Activated CD8-positive, alpha-beta T cell treated with anti-CD3 and anti-CD28 coated beads, Interleukin-2, amount 10 ng/mL, durations not matched to agents 7 days and 5 days (primary cell): ENCODE measurements at regions of chr17 and their contacts with region 1.

Region 1: DNA sequence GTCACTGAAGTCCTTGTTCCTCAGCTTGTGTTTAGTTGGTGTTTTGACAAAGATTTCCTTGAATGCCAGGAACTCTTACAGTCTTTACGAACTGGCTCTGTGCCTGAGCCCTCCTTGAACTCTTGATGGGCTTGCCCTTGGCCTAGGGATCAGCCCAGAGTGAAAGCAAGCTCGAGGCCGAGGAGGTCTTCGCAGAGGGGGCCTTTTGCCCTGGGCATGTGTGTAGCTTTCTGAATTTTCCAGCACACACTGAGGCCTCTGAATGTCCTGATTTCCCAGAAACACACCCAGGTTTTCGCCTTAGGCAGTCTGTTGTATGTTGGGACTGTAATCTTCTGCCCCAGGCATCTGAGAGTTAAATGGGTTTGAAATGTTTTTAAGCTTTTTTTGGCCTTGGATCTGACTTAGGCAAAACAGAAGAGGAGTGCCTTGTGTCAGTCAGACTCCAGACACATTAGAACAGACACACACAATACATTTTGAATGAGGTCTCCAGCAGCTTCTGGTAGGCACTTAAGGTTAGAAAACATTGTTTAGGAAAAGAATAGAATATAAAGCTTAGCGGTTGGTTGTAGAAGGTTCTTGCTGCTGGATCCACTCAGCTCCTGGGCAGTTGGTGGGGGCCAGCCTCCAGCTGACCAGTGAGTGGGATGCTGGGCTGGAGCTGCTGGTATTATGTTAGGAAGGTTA is 17.1 kb downstream of the FOXK2 start:
- DNase-seq: no peak
- ATAC-seq: no peak
- H3K4me3 Mint-ChIP-seq: no peak overlapping the region
- H3K27ac Mint-ChIP-seq: peak overlapping the region; percentile 30
- H3K4me1 Mint-ChIP-seq: peaks cover 28% of the 10 kb centered on the region
- H3K27me3 Mint-ChIP-seq: no peaks in the 10 kb centered on the region

Region 2: GRCh38 chr17:82518826-82519810 is 17.5 kb before region 1 on chr17 and contains the start of gene FOXK2:
- CTCF ChIA-PET with region 1: interaction called, 10 read pairs
- POLR2A ChIA-PET with region 1: no interaction called
- DNase-seq: peak; percentile 93
- ATAC-seq: peak; percentile 99
- H3K4me3 Mint-ChIP-seq: peak within 1 kb of the TSS; percentile 89
- H3K27ac Mint-ChIP-seq: peak within 1 kb of the TSS; percentile 87
- H3K4me1 Mint-ChIP-seq: peaks cover 24% of the 10 kb centered on the region
- H3K27me3 Mint-ChIP-seq: no peaks in the 10 kb centered on the region
- total RNA-seq, gene FOXK2: 62.3 to 65.3 TPM

Region 3: GRCh38 chr17:82553210-82553930 is 16.7 kb after region 1 on chr17:
- CTCF ChIA-PET with region 1: interaction called, 21 read pairs
- POLR2A ChIA-PET with region 1: no interaction called
- DNase-seq: no peak
- ATAC-seq: no peak
- H3K4me3 Mint-ChIP-seq: no peak overlapping the region
- H3K27ac Mint-ChIP-seq: no peak overlapping the region
- H3K4me1 Mint-ChIP-seq: peaks cover 23% of the 10 kb centered on the region
- H3K27me3 Mint-ChIP-seq: no peaks in the 10 kb centered on the region

Region 4: GRCh38 chr17:82577300-82577699 is 40.6 kb after region 1 on chr17:
- CTCF ChIA-PET with region 1: no interaction called
- POLR2A ChIA-PET with region 1: no interaction called
- DNase-seq: no peak
- ATAC-seq: no peak
- H3K4me3 Mint-ChIP-seq: no peak overlapping the region
- H3K27ac Mint-ChIP-seq: no peak overlapping the region
- H3K4me1 Mint-ChIP-seq: no peaks in the 10 kb centered on the region
- H3K27me3 Mint-ChIP-seq: no peaks in the 10 kb centered on the region